Thyroid gland (tissue), 4 donors: ENCODE measurements at regions of chr9 and their contacts with region 1.

Region 1: GRCh38 chr9:120875954-120876841 is 790 bp downstream of the PHF19 start:
- DNase-seq: peak; percentile 57 to 60
- H3K4me3 ChIP-seq: peak overlapping the region; percentile 44 to 76 (median 59)
- H3K27ac ChIP-seq: peak overlapping the region; percentile 87 to 92 (median 88)
- H3K4me1 ChIP-seq: peaks cover 5 to 6% of the 10 kb centered on the region in 2 donors
- H3K27me3 ChIP-seq: no peaks in the 10 kb centered on the region
- CTCF ChIP-seq: no peak
- POLR2A ChIP-seq: no peak

Region 2: GRCh38 chr9:120928483-120929228 is 52.5 kb after region 1 on chr9:
- intact Hi-C with region 1: loop called (anchors 5 kb)
- DNase-seq: peak; percentile 73 to 77
- H3K4me3 ChIP-seq: peak overlapping the region; percentile 62 to 85 (median 78)
- H3K27ac ChIP-seq: peak overlapping the region; percentile 85 to 91 (median 89)
- H3K4me1 ChIP-seq: peaks cover 14 to 28% of the 10 kb centered on the region in 2 donors
- H3K27me3 ChIP-seq: no peaks in the 10 kb centered on the region
- CTCF ChIP-seq: peak in 2 of 6 experiments; percentile 17 to 29
- POLR2A ChIP-seq: peak in 1 of 2 donors; percentile 78

Region 3: DNA sequence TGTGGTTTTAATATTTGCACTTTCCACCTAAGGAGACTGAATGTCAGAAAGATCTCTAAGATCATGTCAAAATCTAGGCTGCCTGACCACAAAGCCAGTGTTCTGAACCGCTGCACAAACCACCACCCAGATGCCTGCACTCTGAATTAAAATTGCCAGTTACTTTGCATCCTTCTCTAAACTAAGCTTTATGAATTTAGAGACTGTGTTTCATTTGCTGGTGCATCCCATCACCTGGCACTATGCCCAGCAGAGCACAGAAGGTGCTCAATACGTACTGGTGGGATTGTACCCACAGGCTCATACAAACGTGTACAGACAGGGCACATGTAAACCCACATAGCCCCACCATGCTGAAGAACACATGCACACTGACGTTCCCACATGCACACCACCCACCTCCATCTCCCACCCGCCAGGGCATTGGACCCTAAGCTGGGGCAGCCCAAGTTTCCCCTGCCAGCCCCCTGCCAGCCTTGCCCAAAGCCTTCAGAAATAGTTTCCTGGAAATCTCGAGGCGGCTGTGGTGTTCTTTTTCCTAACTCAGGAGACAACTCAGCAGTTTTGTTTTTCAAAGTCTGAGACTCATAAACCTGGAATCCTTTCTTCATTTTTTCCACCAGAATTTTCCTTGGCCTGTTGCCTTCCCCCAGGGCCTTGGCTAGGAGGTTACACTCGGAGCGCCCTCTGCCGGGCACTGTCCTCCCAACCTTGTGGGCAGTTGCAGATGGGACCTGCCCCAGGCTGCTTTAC is 60.0 kb after region 1 on chr9:
- intact Hi-C with region 1: loop called (anchors 5 kb)
- DNase-seq: peak; percentile 91 to 94
- H3K4me3 ChIP-seq: no peak overlapping the region
- H3K27ac ChIP-seq: peak overlapping the region; percentile 57 to 91 (median 78)
- H3K4me1 ChIP-seq: peaks cover 33 to 52% of the 10 kb centered on the region in 2 donors
- H3K27me3 ChIP-seq: no peaks in the 10 kb centered on the region
- CTCF ChIP-seq: peak; percentile 73 to 89 (median 79)
- POLR2A ChIP-seq: no peak